ENCODE measurements at regions of chr16 and their contacts with region 1.

Region 1: DNA sequence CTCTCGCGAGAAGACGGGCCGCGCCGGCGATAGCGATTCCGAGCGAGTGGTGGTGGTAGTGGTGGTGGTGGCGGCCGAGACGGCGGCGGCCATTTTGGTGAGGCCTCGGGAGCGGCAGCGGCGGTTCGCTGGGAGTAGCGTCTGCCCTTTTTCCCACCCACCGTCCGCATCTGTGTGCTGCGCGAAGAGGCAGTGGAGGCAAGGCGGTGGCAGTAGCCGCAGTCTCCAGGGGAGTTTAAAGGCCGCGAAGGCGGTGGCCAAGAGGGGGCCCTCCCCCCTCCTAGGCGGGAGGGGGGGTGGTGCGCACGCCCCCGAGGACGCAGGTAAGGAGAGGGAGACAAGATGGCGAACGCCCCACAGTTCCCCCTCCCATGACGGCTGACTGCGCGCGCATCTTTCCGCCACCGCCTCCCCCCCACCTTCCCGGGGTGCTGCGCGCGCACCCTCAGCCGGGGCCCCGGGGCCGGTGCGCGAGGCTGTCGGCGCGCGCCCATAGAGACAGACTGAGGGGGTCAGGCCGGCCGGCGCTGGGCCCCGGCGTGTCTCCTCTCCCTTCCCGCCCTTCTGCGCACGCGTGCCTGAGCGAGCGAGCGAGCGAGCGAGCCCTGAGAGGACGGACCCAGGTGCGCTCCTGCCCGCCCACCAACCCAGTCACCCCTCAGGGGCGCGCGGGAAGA is 694 bp upstream of the SRCAP start:
- DNase-seq: peak; percentile 96
- ATAC-seq: peak; percentile 91

Region 2: GRCh38 chr16:30659507-30660423 is 38.5 kb before region 1 on chr16:
- intact Hi-C with region 1: loop called (anchors 5 kb)
- DNase-seq: peak; percentile 80
- ATAC-seq: no peak